Posterior vena cava (tissue), 2 donors: ENCODE measurements at regions of chr18 and their contacts with region 1.

Region 1: GRCh38 chr18:5295981-5296705 is 617 bp upstream of the ZBTB14 start:
- DNase-seq: peak; percentile 99

Region 2: DNA sequence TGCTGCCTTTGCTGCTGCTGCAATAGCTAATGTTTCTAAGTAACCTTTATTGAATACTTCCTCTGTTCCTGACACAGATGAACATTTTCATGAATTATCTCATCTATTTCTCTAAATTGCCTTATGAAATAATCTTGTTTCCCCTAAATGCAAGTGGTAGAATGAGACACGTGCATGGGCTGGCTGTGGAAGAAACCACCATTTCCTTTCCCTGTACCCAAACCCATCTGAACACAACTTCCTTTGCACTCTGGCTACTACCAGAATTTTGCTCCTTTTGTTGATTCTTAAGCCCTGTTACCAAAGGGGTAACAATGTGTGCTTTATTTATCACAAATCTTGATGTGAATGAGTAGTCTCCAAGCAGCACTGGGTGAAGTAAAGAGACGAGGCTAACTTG is 128.3 kb before region 1 on chr18:
- intact Hi-C with region 1: no loop called
- DNase-seq: no peak

Region 3: DNA sequence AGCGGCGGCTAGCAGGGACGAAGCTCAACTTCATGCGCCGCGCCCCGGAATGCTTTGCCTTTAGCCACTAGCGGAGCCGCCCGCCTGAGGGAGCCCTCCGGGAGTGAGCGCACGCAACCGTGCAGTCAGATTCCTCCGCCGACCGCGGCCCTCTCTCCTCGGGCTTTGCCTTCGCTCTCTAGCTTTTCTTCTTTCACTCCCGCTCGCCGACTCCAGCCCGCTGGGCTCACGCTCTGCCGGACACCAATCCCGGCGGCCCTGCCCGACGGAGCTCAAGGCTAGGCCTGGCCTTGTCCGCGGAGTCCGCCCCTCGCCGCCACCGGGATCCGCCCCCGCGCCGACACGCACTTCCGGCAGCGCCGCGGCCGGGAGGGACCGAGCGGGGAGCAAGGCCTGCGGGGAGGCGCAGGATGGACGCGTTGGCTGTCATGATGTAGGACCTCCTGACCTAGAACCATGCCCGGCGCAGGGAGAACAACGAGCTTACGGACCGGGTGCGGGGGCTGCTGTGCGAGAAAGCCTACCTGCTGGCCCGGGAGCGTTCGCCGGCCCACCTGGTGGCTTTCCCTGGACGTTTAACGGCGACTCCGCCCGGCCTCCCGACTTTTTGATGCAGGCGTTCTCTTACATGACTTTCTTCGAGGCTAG is 58.3 kb before region 1 on chr18:
- intact Hi-C with region 1: loop called (anchors 5 to 10 kb)
- DNase-seq: peak; percentile 96

Region 4: DNA sequence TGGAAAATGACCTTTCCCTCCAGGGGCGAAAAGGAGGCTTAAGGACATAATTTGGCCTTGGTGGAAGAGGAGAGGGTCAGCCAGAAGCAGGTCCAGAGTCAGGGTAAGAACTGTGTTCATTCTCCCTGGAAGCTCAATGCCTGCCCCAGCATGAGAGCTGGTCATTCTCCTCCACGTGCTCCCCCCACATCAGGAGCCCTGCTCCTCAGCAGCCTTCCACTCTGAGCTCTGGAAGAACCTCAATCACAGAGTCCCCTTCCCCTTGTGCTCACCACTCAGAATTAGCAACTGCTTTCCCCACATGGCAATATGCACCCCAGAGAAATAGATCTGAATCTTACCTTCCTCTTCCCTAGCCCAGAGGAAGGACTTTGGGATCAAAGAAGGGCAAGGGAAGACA is 483.8 kb after region 1 on chr18:
- intact Hi-C with region 1: no loop called
- DNase-seq: no peak